Naive thymus-derived CD4-positive, alpha-beta T cell (primary cell): ENCODE measurements at regions of chr19 and their contacts with region 1.

Region 1: DNA sequence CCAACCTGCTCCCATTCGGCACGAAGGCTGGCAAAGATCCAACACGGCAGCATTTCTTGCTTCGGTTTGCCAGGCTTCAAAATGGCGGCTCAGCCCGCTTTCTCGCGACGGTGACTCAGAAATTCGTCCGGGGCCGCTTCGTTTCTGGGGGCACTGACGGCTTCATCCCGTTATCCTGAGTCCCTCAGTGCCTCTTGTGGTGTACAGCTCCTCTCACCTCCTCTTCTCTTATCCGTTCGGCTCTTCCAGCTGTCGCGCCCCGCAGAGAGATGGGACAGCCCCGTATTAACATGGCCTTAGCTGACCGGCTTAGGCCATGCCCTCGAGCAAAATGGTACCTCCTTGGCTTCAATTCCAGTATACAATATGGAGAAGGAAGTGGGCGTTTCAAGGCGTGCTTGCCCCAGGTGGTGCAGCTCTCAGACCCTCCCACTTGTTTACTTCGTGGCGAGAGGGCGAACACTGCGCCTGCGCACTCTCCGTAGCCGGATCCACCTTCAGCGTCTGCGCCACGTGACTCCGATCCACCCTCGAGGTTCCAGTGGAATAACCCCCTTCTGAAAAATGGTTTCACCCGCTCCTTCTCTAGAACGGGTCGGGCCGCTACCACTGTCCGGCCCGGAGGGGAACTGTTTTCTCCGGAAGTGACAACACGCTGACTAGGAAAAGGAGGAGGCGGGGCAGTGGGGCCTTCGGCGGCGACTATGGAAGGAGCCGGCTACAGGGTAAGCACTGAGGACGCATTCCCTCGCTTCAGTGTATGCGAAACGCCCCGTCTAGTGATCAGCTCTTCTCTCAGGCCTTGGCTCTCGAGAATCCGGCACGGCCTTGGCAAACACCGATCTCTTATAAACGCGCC is at the starts of genes AKT1S1 and TBC1D17:
- DNase-seq: peak; percentile 90 to 100 (median 99)
- ATAC-seq: peak; percentile 81
- H3K4me3 ChIP-seq: peak within 1 kb of the TSS; percentile 96
- H3K4me3 Mint-ChIP-seq: no peak within 1 kb of the TSS
- H3K27ac ChIP-seq: peak within 1 kb of the TSS; percentile 97
- H3K27ac Mint-ChIP-seq: no peak within 1 kb of the TSS
- H3K4me1 ChIP-seq: peaks cover 11 to 20% of the 10 kb centered on the region in 2 donors
- H3K4me1 Mint-ChIP-seq: peaks cover 23 to 35% (median 28%) of the 10 kb centered on the region in 7 donors
- H3K27me3 ChIP-seq: no peaks in the 10 kb centered on the region
- H3K27me3 Mint-ChIP-seq: no peaks in the 10 kb centered on the region
- total RNA-seq, gene AKT1S1: 15.9 to 25.7 (median 21.2) TPM
- total RNA-seq, gene TBC1D17: 42.9 to 106 (median 53.0) TPM

Region 2: DNA sequence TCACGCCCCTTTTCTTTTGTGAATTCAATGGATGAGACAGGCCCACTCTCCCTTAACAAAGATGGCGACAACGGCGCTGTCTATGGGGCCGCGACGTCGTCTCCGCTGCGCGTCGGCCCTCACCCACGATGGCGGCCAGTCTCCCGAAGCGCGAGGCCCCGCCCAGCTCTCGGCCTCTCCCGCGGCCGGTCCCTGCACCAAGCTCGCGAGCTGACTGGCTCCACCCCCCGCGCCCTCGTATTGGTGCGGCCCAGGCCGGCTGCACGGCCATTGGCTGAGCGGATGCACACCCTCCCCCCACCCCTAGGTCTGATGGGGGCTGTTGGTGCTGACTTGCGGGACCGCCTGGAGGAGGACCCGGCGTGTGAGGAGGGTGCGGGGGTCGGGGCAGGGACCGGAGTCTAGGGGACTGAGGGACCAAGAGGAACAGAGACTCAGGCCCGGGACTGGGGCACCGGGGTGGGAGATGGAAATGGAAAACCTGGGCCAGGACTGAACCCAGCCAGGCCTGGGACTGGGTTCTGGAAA is 1253.1 kb before region 1 on chr19:
- CTCF ChIA-PET with region 1: no interaction called
- POLR2A ChIA-PET with region 1: interaction called, 4 read pairs
- intact Hi-C with region 1: loop called in 1 of 2 experiments (anchors 5 kb)
- DNase-seq: peak; percentile 83 to 97 (median 87)
- ATAC-seq: peak; percentile 86
- H3K4me3 ChIP-seq: peak overlapping the region; percentile 29
- H3K4me3 Mint-ChIP-seq: peak overlapping the region; percentile 76 to 98 (median 88)
- H3K27ac ChIP-seq: peak overlapping the region; percentile 73
- H3K27ac Mint-ChIP-seq: peak overlapping the region; percentile 86 to 99 (median 92)
- H3K4me1 ChIP-seq: peaks cover 14 to 24% of the 10 kb centered on the region in 2 donors
- H3K4me1 Mint-ChIP-seq: peaks cover 31 to 51% (median 44%) of the 10 kb centered on the region in 7 donors
- H3K27me3 ChIP-seq: no peaks in the 10 kb centered on the region
- H3K27me3 Mint-ChIP-seq: no peaks in the 10 kb centered on the region

Region 3: DNA sequence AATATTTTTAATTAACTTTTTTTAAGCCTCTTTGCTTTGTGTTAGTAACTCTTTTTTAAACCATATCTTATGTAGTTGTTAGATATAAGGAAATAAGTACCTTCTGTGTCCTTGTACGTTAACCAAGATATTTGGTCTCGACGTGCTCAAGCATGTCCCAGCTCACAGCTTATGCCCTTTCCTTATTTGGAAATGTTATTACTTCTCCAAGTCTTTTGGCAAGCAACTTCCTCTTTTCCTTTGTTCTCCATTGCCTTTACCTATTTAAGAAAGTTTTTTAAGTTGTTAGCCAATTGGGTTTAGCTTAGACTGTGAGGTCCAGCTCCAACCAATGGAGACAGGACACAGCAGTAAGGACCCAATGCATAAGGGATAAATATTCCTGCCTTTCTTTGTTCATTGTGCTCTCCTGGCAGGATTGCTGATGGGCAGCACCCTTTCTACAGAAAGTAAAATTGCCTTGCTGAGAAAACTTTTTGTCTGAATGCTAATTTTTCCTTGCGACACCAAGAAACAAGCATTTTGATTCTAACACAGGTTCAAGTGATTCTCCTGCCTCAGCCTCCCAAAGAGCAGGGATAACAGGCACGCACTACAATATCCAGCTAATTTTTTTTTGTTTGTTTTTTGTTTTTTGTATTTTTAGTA is 508.4 kb before region 1 on chr19:
- CTCF ChIA-PET with region 1: no interaction called
- POLR2A ChIA-PET with region 1: no interaction called
- intact Hi-C with region 1: no loop called
- DNase-seq: no peak
- ATAC-seq: no peak
- H3K4me3 ChIP-seq: no peak overlapping the region
- H3K4me3 Mint-ChIP-seq: no peak overlapping the region
- H3K27ac ChIP-seq: no peak overlapping the region
- H3K27ac Mint-ChIP-seq: no peak overlapping the region
- H3K4me1 ChIP-seq: peaks cover under 1 to 5% of the 10 kb centered on the region in 2 donors
- H3K4me1 Mint-ChIP-seq: peaks cover 0 to 3% (median 0%) of the 10 kb centered on the region in 7 donors
- H3K27me3 ChIP-seq: peaks cover 0 to 8% of the 10 kb centered on the region in 2 donors
- H3K27me3 Mint-ChIP-seq: peaks cover 0 to 19% (median 7%) of the 10 kb centered on the region in 5 donors

Region 4: GRCh38 chr19:49497047-49497788 is 380.0 kb before region 1 on chr19:
- CTCF ChIA-PET with region 1: no interaction called
- POLR2A ChIA-PET with region 1: interaction called, 6 read pairs
- intact Hi-C with region 1: loop called (anchors 1 kb)
- DNase-seq: peak; percentile 55 to 85 (median 77)
- ATAC-seq: peak; percentile 20
- H3K4me3 ChIP-seq: peak overlapping the region; percentile 97
- H3K4me3 Mint-ChIP-seq: peak overlapping the region; percentile 96 to 100 (median 99)
- H3K27ac ChIP-seq: peak overlapping the region; percentile 99
- H3K27ac Mint-ChIP-seq: peak overlapping the region; percentile 91 to 100 (median 98)
- H3K4me1 ChIP-seq: peaks cover 21 to 40% of the 10 kb centered on the region in 2 donors
- H3K4me1 Mint-ChIP-seq: peaks cover 32 to 64% (median 50%) of the 10 kb centered on the region in 7 donors
- H3K27me3 ChIP-seq: no peaks in the 10 kb centered on the region
- H3K27me3 Mint-ChIP-seq: peaks cover 0 to 12% (median 0%) of the 10 kb centered on the region in 5 donors

Region 5: DNA sequence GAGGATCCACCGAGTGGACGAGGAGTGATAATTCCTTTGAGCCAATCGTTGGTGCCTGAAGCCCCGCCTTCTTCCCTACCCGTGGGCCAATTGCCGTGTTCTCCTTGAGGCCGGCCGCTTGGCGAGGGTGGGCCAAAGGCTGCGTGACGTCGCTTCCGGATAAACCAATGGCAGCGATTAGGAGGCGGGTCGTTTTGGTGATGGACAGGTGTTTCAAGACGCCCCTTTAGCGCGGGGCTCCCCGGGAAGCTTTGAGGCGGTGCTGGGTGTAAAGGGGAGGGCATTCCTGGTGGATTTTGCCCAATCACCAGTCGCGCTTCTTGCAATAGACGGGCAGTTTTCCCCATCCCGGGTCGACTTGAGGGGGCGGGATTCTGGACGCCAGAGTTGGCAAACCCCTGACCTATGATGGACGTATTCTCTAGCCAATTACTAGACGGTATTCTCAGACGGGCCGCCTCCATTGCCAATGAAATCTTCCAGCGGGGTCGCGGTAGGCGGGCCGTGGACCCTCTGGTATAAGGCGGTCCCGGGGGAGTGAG is 200.5 kb before region 1 on chr19:
- CTCF ChIA-PET with region 1: no interaction called
- POLR2A ChIA-PET with region 1: no interaction called
- intact Hi-C with region 1: loop called (anchors 1 to 2 kb)
- DNase-seq: peak; percentile 84 to 99 (median 97)
- ATAC-seq: peak; percentile 87
- H3K4me3 ChIP-seq: peak overlapping the region; percentile 86
- H3K4me3 Mint-ChIP-seq: peak overlapping the region; percentile 91 to 100 (median 98)
- H3K27ac ChIP-seq: peak overlapping the region; percentile 95
- H3K27ac Mint-ChIP-seq: peak overlapping the region; percentile 93 to 100 (median 99)
- H3K4me1 ChIP-seq: peaks cover 18 to 23% of the 10 kb centered on the region in 2 donors
- H3K4me1 Mint-ChIP-seq: peaks cover 18 to 50% (median 43%) of the 10 kb centered on the region in 7 donors
- H3K27me3 ChIP-seq: no peaks in the 10 kb centered on the region
- H3K27me3 Mint-ChIP-seq: no peaks in the 10 kb centered on the region

Region 6: GRCh38 chr19:49850473-49851342 is 26.5 kb before region 1 on chr19 and contains the start of gene PTOV1:
- CTCF ChIA-PET with region 1: interaction called, 3 read pairs
- POLR2A ChIA-PET with region 1: interaction called, 35 read pairs
- intact Hi-C with region 1: loop called (anchors 1 kb)
- DNase-seq: peak; percentile 78 to 97 (median 88)
- ATAC-seq: peak; percentile 93
- H3K4me3 ChIP-seq: peak within 1 kb of the TSS; percentile 89
- H3K4me3 Mint-ChIP-seq: peak within 1 kb of the TSS; percentile 91 to 96 (median 92)
- H3K27ac ChIP-seq: peak within 1 kb of the TSS; percentile 99
- H3K27ac Mint-ChIP-seq: peak within 1 kb of the TSS; percentile 85 to 98 (median 95)
- H3K4me1 ChIP-seq: peaks cover 7 to 25% of the 10 kb centered on the region in 2 donors
- H3K4me1 Mint-ChIP-seq: peaks cover 22 to 37% (median 33%) of the 10 kb centered on the region in 7 donors
- H3K27me3 ChIP-seq: no peaks in the 10 kb centered on the region
- H3K27me3 Mint-ChIP-seq: peaks cover 0 to 11% (median 0%) of the 10 kb centered on the region in 5 donors
- total RNA-seq, gene PTOV1: 92.8 to 170 (median 160) TPM

Region 7: DNA sequence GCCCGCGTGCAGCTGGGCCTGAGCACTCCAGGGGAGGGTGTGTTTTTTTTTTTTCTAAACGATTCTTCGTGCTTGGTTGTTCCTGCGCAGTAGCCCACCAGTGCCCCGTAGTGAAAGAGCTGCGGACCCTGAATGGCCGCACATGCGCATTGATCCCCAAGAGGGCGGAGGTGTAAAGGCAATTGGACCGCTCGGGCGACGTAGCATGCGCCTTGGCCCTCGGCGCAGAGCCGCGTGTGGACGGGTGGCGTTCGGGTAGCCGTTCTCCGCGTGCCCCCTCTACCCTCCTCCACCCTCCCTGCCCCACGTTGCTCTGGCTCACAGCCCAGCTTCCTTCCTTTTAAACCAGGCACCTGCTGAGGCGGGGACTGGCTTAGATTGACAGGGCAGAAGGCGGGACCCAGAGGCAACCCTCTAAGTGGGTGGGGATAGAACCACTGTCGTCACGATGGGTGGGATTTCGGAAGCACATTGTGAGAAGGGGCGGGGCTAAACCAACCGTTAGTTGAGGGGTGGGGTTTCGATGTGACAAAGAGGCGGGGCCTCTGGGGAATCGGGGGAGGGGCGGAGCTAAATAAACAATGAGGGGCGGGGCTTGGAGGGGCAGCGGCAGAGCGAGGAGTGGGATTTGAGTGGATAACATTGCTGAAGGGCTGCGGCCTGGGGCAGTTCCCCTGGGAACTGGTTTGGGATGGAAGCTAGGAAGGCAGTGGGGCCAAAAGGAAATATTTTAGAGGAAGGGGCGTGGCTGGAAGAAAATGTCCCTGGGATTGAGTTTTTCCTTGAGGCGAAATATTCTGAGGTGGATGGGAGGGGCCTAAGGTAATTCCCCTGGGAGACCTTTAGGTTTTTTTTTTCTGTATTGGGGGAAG is 52.6 kb after region 1 on chr19:
- CTCF ChIA-PET with region 1: no interaction called
- POLR2A ChIA-PET with region 1: interaction called, 30 read pairs
- intact Hi-C with region 1: loop called (anchors 1 kb)
- DNase-seq: peak in 8 of 9 donors; percentile 88 to 97 (median 96)
- ATAC-seq: peak; percentile 92
- H3K4me3 ChIP-seq: peak overlapping the region; percentile 100
- H3K4me3 Mint-ChIP-seq: peak overlapping the region; percentile 95 to 100 (median 97)
- H3K27ac ChIP-seq: peak overlapping the region; percentile 99
- H3K27ac Mint-ChIP-seq: peak overlapping the region; percentile 96 to 99 (median 97)
- H3K4me1 ChIP-seq: peaks cover 34 to 35% of the 10 kb centered on the region in 2 donors
- H3K4me1 Mint-ChIP-seq: peaks cover 46 to 76% (median 68%) of the 10 kb centered on the region in 7 donors
- H3K27me3 ChIP-seq: no peaks in the 10 kb centered on the region
- H3K27me3 Mint-ChIP-seq: peaks cover 0 to 3% (median 0%) of the 10 kb centered on the region in 5 donors

Region 8: DNA sequence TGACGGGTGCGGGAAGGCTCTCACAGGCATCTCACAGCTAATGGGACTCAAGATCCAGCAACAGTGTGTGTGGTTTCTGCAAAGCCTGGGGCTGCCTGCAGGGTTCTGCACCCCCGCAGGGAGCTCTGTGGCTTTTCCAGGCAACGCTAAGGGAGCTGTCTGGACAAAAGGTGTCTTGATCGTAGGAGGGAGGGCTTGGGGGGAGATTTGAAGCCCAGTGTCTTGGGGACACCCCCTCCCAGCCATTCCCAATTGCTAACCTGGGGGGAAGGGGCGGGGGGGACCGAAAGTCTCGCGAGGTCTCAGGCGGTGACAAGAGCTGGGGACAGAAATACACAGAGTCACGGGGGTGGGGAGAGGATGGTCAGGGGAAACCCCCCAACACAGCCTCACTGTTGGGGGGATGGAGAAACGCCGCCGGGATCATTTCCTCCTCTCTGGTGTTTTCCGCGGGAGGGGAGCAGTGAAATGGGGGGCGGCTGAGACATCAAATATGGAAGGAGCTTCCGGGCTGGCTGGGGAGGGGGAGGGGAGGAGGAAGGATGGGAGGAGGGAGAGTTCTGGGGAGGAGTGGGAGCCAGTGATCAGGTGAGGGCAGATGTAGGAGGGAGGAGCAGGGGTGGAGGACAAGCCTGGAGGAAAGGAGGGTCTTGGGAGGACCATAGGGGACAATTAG is 438.7 kb after region 1 on chr19:
- CTCF ChIA-PET with region 1: no interaction called
- POLR2A ChIA-PET with region 1: no interaction called
- intact Hi-C with region 1: no loop called
- DNase-seq: peak in 1 of 9 donors; percentile 48
- ATAC-seq: peak; percentile 38
- H3K4me3 ChIP-seq: peak overlapping the region; percentile 22
- H3K4me3 Mint-ChIP-seq: peak overlapping the region; percentile 34 to 89 (median 72)
- H3K27ac ChIP-seq: no peak overlapping the region
- H3K27ac Mint-ChIP-seq: peak overlapping the region in 1 of 9 donors; percentile 38
- H3K4me1 ChIP-seq: no peaks in the 10 kb centered on the region
- H3K4me1 Mint-ChIP-seq: peaks cover 13 to 20% (median 15%) of the 10 kb centered on the region in 7 donors
- H3K27me3 ChIP-seq: peaks cover 0 to 23% of the 10 kb centered on the region in 2 donors
- H3K27me3 Mint-ChIP-seq: peaks cover 47 to 73% (median 55%) of the 10 kb centered on the region in 5 donors

Region 9: DNA sequence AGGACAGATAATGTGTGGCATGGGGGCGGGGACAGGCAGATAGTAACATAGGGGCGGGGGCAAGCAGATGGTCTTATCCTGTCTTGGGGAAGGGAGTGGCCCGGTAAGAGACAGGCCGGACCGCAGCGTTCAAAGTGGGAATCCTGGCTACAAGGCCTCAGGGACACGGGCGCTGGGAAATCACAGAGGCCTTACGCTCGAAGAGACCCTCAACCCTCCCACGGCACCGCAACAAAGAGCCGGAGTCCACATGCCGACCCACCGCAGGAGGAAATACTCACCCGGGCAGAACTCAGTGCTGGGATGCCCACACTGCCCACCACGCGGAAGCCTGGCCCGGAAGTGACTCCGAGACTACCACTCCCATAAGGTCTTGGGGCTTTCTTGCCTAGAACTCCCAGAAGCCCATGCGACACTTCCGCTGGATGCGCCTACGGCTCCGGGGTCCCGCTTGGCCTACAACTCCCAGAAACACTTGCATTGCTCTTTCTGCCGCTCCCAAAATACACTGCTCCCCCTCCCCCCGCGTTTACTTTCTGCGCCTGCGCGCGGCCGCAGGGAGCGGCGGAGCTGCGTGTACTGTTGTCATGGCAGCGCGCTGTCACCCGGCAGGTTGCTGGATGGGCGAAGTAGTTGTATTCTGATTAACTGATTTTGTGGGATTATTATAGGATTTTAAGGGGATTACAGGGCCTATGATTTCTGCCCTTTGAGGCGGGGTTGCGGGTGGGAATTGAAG is 1231.0 kb after region 1 on chr19 and contains the start of gene CTU1:
- CTCF ChIA-PET with region 1: no interaction called
- POLR2A ChIA-PET with region 1: no interaction called
- intact Hi-C with region 1: loop called in 1 of 2 experiments (anchors 2 kb)
- DNase-seq: peak; percentile 93 to 99 (median 98)
- ATAC-seq: peak; percentile 99
- H3K4me3 ChIP-seq: peak within 1 kb of the TSS; percentile 92
- H3K4me3 Mint-ChIP-seq: peak within 1 kb of the TSS; percentile 90 to 100 (median 98)
- H3K27ac ChIP-seq: peak within 1 kb of the TSS; percentile 77
- H3K27ac Mint-ChIP-seq: peak within 1 kb of the TSS; percentile 92 to 99 (median 97)
- H3K4me1 ChIP-seq: peaks cover 13% of the 10 kb centered on the region in 2 donors
- H3K4me1 Mint-ChIP-seq: peaks cover 28 to 48% (median 42%) of the 10 kb centered on the region in 7 donors
- H3K27me3 ChIP-seq: no peaks in the 10 kb centered on the region
- H3K27me3 Mint-ChIP-seq: no peaks in the 10 kb centered on the region
- total RNA-seq, gene CTU1: 3.3 to 11.8 (median 10.5) TPM